Lower leg skin (tissue), 4 donors: ENCODE measurements at regions of chr3 and their contacts with region 1.

Region 1: GRCh38 chr3:183377307-183377959 is 51.0 kb downstream of the MCF2L2 start:
- DNase-seq: no peak
- H3K4me3 ChIP-seq: no peak overlapping the region
- CTCF ChIP-seq: no peak
- POLR2A ChIP-seq: no peak

Region 2: DNA sequence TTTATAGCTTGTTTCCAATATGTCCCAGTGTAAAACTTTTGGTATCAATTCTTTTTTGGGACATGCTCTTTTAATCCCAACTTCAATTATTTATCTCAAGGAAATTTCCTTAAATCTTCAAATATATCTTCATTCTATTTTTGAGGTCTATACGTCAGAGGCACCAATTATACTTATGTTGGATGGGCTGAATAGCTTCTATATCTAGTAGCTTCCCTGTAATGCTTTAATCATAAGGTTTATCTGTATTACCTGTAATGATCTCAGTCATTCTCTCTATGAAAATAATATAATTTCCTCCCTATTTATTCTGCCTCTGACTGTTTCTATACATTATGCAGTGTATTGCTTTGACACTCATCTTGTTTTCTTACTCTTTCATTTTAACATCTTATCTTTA is 248.2 kb before region 1 on chr3:
- intact Hi-C with region 1: loop called (anchors 5 kb)
- DNase-seq: no peak
- H3K4me3 ChIP-seq: no peak overlapping the region
- CTCF ChIP-seq: no peak
- POLR2A ChIP-seq: no peak

Region 3: GRCh38 chr3:183306798-183307671 is 70.4 kb before region 1 on chr3:
- intact Hi-C with region 1: loop called (anchors 10 kb)
- DNase-seq: peak; percentile 75 to 91
- H3K4me3 ChIP-seq: no peak overlapping the region
- CTCF ChIP-seq: no peak
- POLR2A ChIP-seq: no peak

Region 4: GRCh38 chr3:183410280-183410679 is 32.8 kb after region 1 on chr3:
- intact Hi-C with region 1: no loop called
- DNase-seq: no peak
- H3K4me3 ChIP-seq: no peak overlapping the region
- CTCF ChIP-seq: no peak
- POLR2A ChIP-seq: no peak